Activated T-helper 1 cell treated with anti-CD3 and anti-CD28 coated beads, Interleukin-12 subunit alpha, Interleukin-12 subunit beta, Interleukin-2, Interleukin-4 antibody, amounts not matched to agents 30 ng/mL and 10 ng/mL and 1 ng/mL, durations not matched to agents 14 hours and 24 hours and 36 hours (primary cell): ENCODE measurements at regions of chr18 and their contacts with region 1.

Region 1: DNA sequence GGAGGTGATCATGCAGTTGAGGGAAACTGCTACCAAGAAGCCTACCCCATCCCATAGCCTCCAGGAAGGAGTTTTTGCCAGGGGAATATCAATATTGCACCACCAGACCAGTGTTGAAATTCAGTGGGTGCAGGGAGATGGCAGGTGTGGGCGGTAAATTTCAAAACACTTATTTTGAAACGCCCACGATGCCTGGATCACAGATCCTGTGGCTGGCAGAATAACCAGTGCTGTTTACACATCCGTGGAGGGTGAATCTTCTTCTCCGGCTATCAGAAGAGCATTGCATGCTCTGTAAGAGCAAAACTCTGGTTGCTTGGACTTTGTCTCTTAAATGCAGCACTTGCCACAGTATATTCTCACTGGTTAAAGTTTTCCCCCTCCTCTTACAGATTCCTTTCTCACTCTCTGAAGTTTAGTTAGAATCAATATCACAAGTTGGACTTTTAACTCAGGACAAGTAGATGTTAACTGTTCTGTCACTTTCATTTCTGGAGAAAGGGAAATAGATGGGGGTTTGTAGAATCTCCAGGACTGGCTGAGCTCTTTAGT is 70.5 kb upstream of the ZCCHC2 start:
- DNase-seq: no peak
- H3K4me3 Mint-ChIP-seq: peak overlapping the region; percentile 28
- H3K27ac Mint-ChIP-seq: peak overlapping the region; percentile 63
- H3K4me1 Mint-ChIP-seq: peaks cover 31% of the 10 kb centered on the region
- H3K27me3 Mint-ChIP-seq: peaks cover 4% of the 10 kb centered on the region

Region 2: DNA sequence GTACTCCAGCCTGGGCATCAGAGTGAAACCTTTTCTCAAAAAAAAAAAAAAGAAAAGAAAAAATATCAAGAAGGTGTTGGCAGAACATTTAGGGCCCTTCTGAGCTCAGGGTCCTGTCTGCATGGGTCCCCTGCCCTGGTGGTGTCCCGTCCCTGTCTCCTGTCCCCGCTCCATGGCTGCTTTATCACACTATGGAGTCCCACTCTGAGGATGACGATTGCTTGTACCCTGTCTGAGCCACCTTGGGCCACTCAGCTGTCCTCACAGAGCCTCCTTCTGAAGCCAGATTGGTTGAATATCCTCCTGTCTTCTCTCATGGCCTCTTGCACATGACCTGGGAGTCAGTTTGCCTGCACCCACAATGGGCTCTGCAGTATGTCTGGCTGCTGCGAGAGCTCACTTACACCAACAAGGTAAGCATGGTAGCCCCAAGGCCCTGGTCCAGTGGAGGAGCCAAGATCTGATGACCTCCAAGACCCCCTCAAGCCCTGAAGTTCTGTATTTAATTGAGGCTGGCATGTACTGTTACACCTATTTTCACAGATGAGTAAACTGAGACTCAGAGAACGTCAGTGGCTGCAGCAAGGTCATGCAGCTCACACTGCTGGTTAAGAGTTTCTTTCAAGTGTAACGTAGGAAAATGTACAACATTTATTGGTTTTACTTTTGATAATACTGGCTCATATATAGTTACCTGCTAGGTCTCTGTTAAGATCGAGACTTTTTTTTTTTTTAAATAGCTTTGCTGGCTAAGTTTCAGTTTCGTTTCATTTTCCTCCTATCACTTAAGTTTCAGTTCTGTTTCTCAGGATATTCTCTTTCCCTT is 53.5 kb after region 1 on chr18:
- intact Hi-C with region 1: loop called (anchors 2 kb)
- DNase-seq: peak; percentile 25
- H3K4me3 Mint-ChIP-seq: peak overlapping the region; percentile 81
- H3K27ac Mint-ChIP-seq: peak overlapping the region; percentile 96
- H3K4me1 Mint-ChIP-seq: peaks cover 23% of the 10 kb centered on the region
- H3K27me3 Mint-ChIP-seq: peaks cover 2% of the 10 kb centered on the region